ENCODE measurements at regions of chrX and their contacts with region 1.

Region 1: DNA sequence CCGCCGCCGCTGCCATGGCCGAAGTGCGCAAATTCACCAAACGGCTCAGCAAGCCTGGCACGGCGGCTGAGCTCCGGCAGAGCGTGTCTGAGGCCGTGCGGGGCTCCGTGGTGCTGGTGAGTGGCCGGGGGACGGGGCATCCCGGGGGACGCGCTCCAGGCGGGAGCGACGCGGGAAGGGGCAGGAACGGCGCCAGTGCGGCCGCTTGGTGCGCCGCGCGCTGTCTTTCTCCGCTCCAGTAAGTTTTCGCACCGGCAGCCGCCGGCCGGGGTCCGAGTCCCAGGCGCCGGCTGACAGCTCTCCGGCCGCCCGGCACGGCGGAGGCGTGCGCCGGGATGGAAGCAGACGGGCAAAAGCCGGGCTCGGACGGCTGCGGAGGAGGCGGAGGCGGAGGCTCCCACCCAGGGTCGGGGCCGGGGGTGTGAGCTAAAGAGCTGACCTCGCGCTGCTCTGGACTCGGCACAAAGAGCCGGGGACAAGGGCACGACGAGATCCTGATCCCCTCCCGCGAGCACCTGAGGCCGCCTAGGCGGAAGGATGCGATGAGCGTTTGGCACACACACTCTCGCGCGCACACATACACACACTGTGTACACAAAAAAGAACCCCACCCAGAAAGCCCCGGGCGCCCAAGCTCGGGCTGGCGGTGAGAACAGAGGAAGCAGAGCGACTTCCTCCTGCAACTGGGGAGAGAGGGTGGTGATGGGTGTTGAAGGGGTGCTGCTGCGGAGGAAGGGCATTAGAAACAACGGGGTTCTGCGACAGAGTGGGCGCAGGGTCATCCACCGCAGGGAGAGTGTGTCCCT is 546 bp downstream of the DOCK11 start:
- DNase-seq: peak; percentile 64 to 87
- ATAC-seq: peak; percentile 63 to 80 (median 69)
- H3K4me3 ChIP-seq: peak overlapping the region; percentile 81
- H3K4me3 Mint-ChIP-seq: peak overlapping the region; percentile 97
- H3K27ac ChIP-seq: peak overlapping the region; percentile 91
- H3K27ac Mint-ChIP-seq: peak overlapping the region; percentile 95 to 99
- H3K4me1 ChIP-seq: peaks cover 27% of the 10 kb centered on the region
- H3K4me1 Mint-ChIP-seq: peaks cover 30 to 39% of the 10 kb centered on the region in 2 donors
- H3K27me3 ChIP-seq: no peaks in the 10 kb centered on the region
- H3K27me3 Mint-ChIP-seq: no peaks in the 10 kb centered on the region
- CTCF ChIP-seq: no peak

Region 2: DNA sequence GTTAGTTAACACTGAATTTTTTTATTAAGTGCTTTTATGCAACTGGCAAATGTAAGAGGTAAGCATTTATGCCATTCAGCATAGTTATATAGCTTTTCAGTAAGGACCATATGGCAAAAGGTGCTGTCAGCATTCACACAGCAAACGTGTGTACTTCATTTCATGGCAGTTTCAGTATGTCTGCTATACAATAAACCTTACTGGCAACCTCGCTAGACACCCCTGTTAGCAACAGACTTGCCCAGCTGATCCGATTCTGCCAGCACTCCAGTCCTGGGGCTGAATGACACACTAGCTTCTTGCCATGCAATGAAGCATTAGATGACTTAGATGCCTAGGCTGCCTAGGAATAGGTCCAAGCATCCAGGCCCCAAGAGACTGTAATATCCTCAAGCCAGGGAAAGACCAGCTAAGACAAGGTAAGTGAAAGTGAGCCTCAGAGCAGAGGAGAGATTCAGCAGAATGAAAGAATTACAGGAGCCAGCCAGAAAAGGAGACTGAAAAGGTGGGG is 47.8 kb before region 1 on chrX:
- intact Hi-C with region 1: no loop called
- DNase-seq: no peak
- ATAC-seq: no peak
- H3K4me3 ChIP-seq: no peak overlapping the region
- H3K4me3 Mint-ChIP-seq: no peak overlapping the region
- H3K27ac ChIP-seq: no peak overlapping the region
- H3K27ac Mint-ChIP-seq: no peak overlapping the region
- H3K4me1 ChIP-seq: no peaks in the 10 kb centered on the region
- H3K4me1 Mint-ChIP-seq: no peaks in the 10 kb centered on the region
- H3K27me3 ChIP-seq: no peaks in the 10 kb centered on the region
- H3K27me3 Mint-ChIP-seq: no peaks in the 10 kb centered on the region
- CTCF ChIP-seq: no peak

Region 3: DNA sequence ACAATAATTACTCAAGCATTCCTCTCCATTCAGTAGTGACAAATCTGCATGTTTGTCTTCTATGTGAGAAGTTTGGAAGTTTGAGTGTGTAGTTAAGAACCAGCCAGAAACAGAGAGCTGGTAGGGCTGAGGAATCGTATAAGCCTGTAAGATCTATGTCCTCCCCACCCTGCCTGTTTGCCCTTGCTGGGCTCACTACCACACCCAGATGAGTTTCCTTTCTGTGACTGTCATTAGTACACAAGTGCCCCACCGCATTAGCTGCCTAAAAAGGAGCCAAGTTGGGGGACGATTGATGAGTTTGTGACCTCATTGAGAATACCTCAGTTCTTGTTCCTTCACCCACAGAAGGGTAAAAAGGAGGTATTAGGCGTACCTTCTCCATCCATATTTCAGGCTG is 27.8 kb after region 1 on chrX:
- intact Hi-C with region 1: loop called (anchors 2 kb)
- DNase-seq: peak in 1 of 2 donors; percentile 72
- ATAC-seq: peak; percentile 56 to 78 (median 58)
- H3K4me3 ChIP-seq: peak overlapping the region; percentile 1
- H3K4me3 Mint-ChIP-seq: peak overlapping the region; percentile 76
- H3K27ac ChIP-seq: peak overlapping the region; percentile 70
- H3K27ac Mint-ChIP-seq: peak overlapping the region; percentile 86 to 92
- H3K4me1 ChIP-seq: peaks cover 40% of the 10 kb centered on the region
- H3K4me1 Mint-ChIP-seq: peaks cover 59 to 63% of the 10 kb centered on the region in 2 donors
- H3K27me3 ChIP-seq: no peaks in the 10 kb centered on the region
- H3K27me3 Mint-ChIP-seq: no peaks in the 10 kb centered on the region
- CTCF ChIP-seq: no peak

Region 4: GRCh38 chrX:118536687-118537461 is 40.7 kb after region 1 on chrX:
- intact Hi-C with region 1: loop called (anchors 2 kb)
- DNase-seq: peak; percentile 29 to 75
- ATAC-seq: peak; percentile 74 to 81 (median 81)
- H3K4me3 ChIP-seq: no peak overlapping the region
- H3K4me3 Mint-ChIP-seq: peak overlapping the region; percentile 74
- H3K27ac ChIP-seq: peak overlapping the region; percentile 62
- H3K27ac Mint-ChIP-seq: peak overlapping the region; percentile 81 to 94
- H3K4me1 ChIP-seq: peaks cover 23% of the 10 kb centered on the region
- H3K4me1 Mint-ChIP-seq: peaks cover 39 to 56% of the 10 kb centered on the region in 2 donors
- H3K27me3 ChIP-seq: no peaks in the 10 kb centered on the region
- H3K27me3 Mint-ChIP-seq: no peaks in the 10 kb centered on the region
- CTCF ChIP-seq: peak; percentile 33

Measured in natural killer cell (primary cell).